Calu3 (cell line): ENCODE measurements at regions of chr1 and their contacts with region 1.

Region 1: DNA sequence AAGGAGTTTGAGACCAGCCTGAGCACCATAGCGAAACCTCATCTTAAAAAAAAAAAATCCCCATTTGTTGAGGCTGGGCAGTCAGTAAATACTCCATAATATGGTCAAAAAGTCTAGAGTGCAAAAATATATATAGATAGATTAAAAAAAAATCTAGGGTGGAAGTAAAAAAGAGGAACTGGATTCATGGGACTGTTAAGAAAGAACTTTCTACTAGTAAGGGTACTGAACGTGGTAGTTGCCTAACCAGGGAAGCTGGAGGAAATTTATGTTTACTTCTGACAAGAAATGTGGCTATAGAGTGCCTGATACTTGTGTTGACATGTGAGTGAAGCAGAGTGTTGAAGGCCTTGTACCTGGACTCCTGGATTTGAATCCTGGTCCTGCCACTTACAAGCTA is 265.9 kb upstream of the FAM78B start:
- DNase-seq: no peak
- H3K4me3 Mint-ChIP-seq: no peak overlapping the region
- H3K27ac Mint-ChIP-seq: no peak overlapping the region
- H3K4me1 Mint-ChIP-seq: no peaks in the 10 kb centered on the region
- H3K27me3 Mint-ChIP-seq: no peaks in the 10 kb centered on the region
- CTCF ChIP-seq: no peak

Region 2: GRCh38 chr1:166133276-166133841 is 299.3 kb before region 1 on chr1:
- CTCF ChIA-PET with region 1: no interaction called
- intact Hi-C with region 1: loop called (anchors 1 kb)
- DNase-seq: peak; percentile 12
- H3K4me3 Mint-ChIP-seq: no peak overlapping the region
- H3K27ac Mint-ChIP-seq: no peak overlapping the region
- H3K4me1 Mint-ChIP-seq: no peaks in the 10 kb centered on the region
- H3K27me3 Mint-ChIP-seq: no peaks in the 10 kb centered on the region
- CTCF ChIP-seq: peak; percentile 54

Region 3: DNA sequence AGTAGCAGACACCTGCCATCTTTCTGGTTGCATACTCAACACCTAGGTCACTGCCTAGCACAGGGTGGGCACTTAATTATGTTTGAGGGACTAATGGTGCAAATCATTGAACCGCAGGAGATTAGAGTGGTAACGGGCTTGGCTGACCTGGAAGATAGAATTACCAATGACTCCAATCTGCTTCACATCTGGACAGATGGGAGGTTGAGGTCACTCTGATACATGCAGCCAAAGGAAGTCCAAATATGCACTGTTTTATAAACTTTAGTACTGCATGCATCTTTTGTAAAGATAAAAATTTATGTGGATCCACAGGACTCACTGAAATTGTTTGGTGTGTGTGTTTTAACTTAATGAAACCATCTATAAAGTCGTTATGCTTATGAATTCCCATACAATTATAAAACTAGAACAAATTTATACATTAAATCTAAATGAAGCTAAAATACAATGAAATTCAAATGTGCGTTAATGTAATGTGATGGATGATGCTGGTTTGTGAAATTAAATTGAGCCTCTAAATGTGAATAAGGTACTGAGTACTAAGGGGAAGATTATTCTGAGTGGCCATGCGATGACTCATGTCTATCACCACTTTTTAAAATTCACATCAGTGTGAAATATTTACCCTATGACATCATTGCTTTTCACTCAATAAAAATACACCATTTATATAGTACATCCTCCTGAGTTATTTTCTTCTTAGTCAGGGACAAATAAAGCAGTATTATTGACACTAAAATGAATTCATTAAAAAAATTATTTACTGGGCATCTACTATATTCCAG is 41.2 kb before region 1 on chr1:
- CTCF ChIA-PET with region 1: no interaction called
- intact Hi-C with region 1: no loop called
- DNase-seq: no peak
- H3K4me3 Mint-ChIP-seq: no peak overlapping the region
- H3K27ac Mint-ChIP-seq: no peak overlapping the region
- H3K4me1 Mint-ChIP-seq: no peaks in the 10 kb centered on the region
- H3K27me3 Mint-ChIP-seq: peaks cover 14% of the 10 kb centered on the region
- CTCF ChIP-seq: no peak